Heart right ventricle (tissue), 16 donors: ENCODE measurements at regions of chr1 and their contacts with region 1.

Region 1: DNA sequence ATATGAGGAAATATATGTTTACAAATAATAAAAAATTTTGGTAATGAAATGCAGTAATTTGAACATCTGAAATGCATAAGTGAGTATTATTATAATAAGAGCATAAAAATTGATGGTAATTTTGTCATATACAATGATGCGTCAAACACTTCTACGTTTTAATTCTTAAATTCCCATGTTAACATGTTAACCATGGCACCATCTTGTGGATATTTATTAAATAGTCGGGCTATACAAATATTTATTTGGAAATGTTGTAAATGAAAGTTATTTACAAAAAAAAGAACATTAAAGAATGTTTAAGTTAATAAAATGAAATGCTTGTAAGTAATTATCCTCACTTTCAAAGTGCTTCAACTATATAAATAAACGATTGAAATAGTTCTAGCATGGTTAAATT is 57.2 kb upstream of the C1orf185 start:
- DNase-seq: no peak
- ATAC-seq: no peak
- H3K4me3 ChIP-seq: no peak overlapping the region
- H3K27ac ChIP-seq: no peak overlapping the region
- H3K4me1 ChIP-seq: no peaks in the 10 kb centered on the region
- H3K27me3 ChIP-seq: no peaks in the 10 kb centered on the region
- CTCF ChIP-seq: peak in 8 of 9 donors; percentile 9 to 68 (median 46)

Region 2: GRCh38 chr1:50873458-50874187 is 171.2 kb before region 1 on chr1:
- intact Hi-C with region 1: loop called in 1 of 10 experiments (anchors 10 kb)
- DNase-seq: peak; percentile 15 to 29
- ATAC-seq: peak in 2 of 8 donors; percentile 42 to 47
- H3K4me3 ChIP-seq: no peak overlapping the region
- H3K27ac ChIP-seq: no peak overlapping the region
- H3K4me1 ChIP-seq: peaks cover 0 to 6% (median 0%) of the 10 kb centered on the region in 9 donors
- H3K27me3 ChIP-seq: no peaks in the 10 kb centered on the region
- CTCF ChIP-seq: peak in 8 of 9 donors; percentile 8 to 67 (median 47)

Region 3: DNA sequence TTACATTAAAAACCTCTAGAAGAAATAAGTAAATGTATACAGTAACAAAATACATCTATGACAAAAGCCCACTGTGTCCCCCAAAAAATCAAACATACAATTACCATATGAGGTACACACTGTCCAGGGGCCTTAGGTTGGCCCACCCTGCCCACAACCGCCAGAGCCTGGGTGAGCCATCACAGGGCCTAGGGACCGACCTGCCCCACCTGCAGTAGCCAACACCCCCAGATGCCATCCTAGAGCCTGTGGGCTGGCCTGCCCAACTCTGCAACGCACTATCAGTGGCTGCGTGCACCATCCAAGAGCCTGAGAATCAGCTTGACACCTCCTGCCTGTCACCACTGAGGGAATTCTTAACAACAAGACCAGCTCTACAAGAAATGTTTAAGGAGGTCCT is 123.8 kb before region 1 on chr1:
- intact Hi-C with region 1: loop called in 6 of 10 experiments (anchors 5 to 10 kb)
- DNase-seq: no peak
- ATAC-seq: no peak
- H3K4me3 ChIP-seq: no peak overlapping the region
- H3K27ac ChIP-seq: no peak overlapping the region
- H3K4me1 ChIP-seq: peaks cover 0 to 19% (median 11%) of the 10 kb centered on the region in 9 donors
- H3K27me3 ChIP-seq: no peaks in the 10 kb centered on the region
- CTCF ChIP-seq: no peak

Region 4: GRCh38 chr1:50929376-50929958 is 115.4 kb before region 1 on chr1:
- intact Hi-C with region 1: loop called in 9 of 10 experiments (anchors 5 to 10 kb)
- DNase-seq: no peak
- ATAC-seq: no peak
- H3K4me3 ChIP-seq: no peak overlapping the region
- H3K27ac ChIP-seq: no peak overlapping the region
- H3K4me1 ChIP-seq: peaks cover 0 to 19% (median 9%) of the 10 kb centered on the region in 9 donors
- H3K27me3 ChIP-seq: no peaks in the 10 kb centered on the region
- CTCF ChIP-seq: peak; percentile 13 to 77 (median 59)